Naive thymus-derived CD4-positive, alpha-beta T cell (primary cell): ENCODE measurements at regions of chr10 and their contacts with region 1.

Region 1: GRCh38 chr10:98134431-98135221 is at the start of gene R3HCC1L:
- DNase-seq: peak; percentile 87 to 95 (median 93)
- ATAC-seq: peak; percentile 98
- H3K4me3 ChIP-seq: peak within 1 kb of the TSS; percentile 91
- H3K4me3 Mint-ChIP-seq: peak within 1 kb of the TSS; percentile 78 to 95 (median 86)
- H3K27ac ChIP-seq: peak within 1 kb of the TSS; percentile 96
- H3K27ac Mint-ChIP-seq: peak within 1 kb of the TSS; percentile 71 to 98 (median 96)
- H3K4me1 ChIP-seq: peaks cover 23 to 27% of the 10 kb centered on the region in 2 donors
- H3K4me1 Mint-ChIP-seq: peaks cover 0 to 53% (median 44%) of the 10 kb centered on the region in 7 donors
- H3K27me3 ChIP-seq: no peaks in the 10 kb centered on the region
- H3K27me3 Mint-ChIP-seq: peaks cover 0 to 2% (median 0%) of the 10 kb centered on the region in 5 donors
- total RNA-seq, gene R3HCC1L: 17.6 to 25.3 (median 20.4) TPM

Region 2: GRCh38 chr10:97632949-97633884 is 501.4 kb before region 1 on chr10 and contains the start of gene MORN4:
- CTCF ChIA-PET with region 1: no interaction called
- POLR2A ChIA-PET with region 1: no interaction called
- intact Hi-C with region 1: loop called in 1 of 2 experiments (anchors 1 kb)
- DNase-seq: peak; percentile 82 to 94 (median 92)
- ATAC-seq: peak; percentile 100
- H3K4me3 ChIP-seq: peak within 1 kb of the TSS; percentile 91
- H3K4me3 Mint-ChIP-seq: peak within 1 kb of the TSS; percentile 92 to 100 (median 98)
- H3K27ac ChIP-seq: peak within 1 kb of the TSS; percentile 50
- H3K27ac Mint-ChIP-seq: peak within 1 kb of the TSS; percentile 82 to 96 (median 92)
- H3K4me1 ChIP-seq: peaks cover 0 to 10% of the 10 kb centered on the region in 2 donors
- H3K4me1 Mint-ChIP-seq: peaks cover 10 to 18% (median 16%) of the 10 kb centered on the region in 7 donors
- H3K27me3 ChIP-seq: no peaks in the 10 kb centered on the region
- H3K27me3 Mint-ChIP-seq: no peaks in the 10 kb centered on the region
- total RNA-seq, gene MORN4: 0.78 to 4.1 (median 1.5) TPM

Region 3: DNA sequence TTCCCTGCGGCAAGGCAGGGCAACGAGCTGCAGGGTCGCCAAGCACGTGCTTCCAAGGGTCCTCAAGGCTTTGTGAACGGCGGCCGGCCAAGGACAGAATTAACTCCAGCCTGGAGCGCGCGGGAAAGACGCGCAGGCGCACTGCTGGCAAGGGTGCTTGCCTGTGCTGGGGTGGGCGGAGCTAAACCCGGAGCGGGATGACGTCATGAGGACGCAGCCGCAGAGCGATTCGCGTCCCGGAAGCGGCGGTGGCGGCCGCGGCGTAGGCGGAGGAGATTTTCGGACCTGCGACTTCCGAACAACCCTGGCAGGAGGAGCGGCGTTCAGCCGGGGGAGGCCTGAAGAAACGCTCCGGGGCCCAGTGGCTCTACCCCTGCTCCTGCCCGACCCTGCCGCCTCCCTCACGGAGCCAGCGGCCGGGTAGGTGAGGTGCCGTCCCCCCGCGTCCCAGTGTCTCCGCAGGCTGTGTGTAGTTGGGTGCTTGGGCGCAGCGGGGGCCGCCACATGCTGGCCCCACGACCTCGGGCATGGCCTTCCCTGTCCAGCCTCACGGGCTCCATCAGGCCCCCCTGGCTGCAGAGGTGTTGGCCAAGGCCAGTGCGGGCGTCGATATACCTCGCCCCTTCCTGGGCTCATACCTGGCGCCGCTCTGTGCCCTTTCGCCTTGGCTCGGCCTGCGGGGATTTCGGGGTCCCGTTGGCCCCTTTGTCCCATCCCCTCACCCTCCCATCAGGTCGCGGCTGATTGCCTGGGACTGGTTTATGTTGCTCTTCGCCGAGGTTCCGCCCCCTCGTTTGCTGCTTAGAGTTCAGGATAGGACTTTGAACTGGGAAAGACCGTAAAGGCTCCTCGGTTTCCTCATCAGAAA is 397.5 kb before region 1 on chr10 and contains the start of gene ZFYVE27:
- CTCF ChIA-PET with region 1: interaction called, 3 read pairs
- POLR2A ChIA-PET with region 1: interaction called, 7 read pairs
- intact Hi-C with region 1: loop called in 1 of 2 experiments (anchors 10 kb)
- DNase-seq: peak; percentile 88 to 99 (median 94)
- ATAC-seq: peak; percentile 96
- H3K4me3 ChIP-seq: peak within 1 kb of the TSS; percentile 86
- H3K4me3 Mint-ChIP-seq: peak within 1 kb of the TSS; percentile 88 to 98 (median 94)
- H3K27ac ChIP-seq: peak within 1 kb of the TSS; percentile 99
- H3K27ac Mint-ChIP-seq: peak within 1 kb of the TSS; percentile 95 to 99 (median 97)
- H3K4me1 ChIP-seq: peaks cover 18% of the 10 kb centered on the region in 2 donors
- H3K4me1 Mint-ChIP-seq: peaks cover 20 to 62% (median 58%) of the 10 kb centered on the region in 7 donors
- H3K27me3 ChIP-seq: no peaks in the 10 kb centered on the region
- H3K27me3 Mint-ChIP-seq: peaks cover 0 to 3% (median 0%) of the 10 kb centered on the region in 5 donors
- total RNA-seq, gene ZFYVE27: 31.0 to 68.8 (median 61.8) TPM

Region 4: GRCh38 chr10:98414932-98415730 is 280.5 kb after region 1 on chr10 and contains the start of gene PYROXD2:
- CTCF ChIA-PET with region 1: no interaction called
- POLR2A ChIA-PET with region 1: no interaction called
- intact Hi-C with region 1: loop called in 1 of 2 experiments (anchors 1 kb)
- DNase-seq: peak in 8 of 9 donors; percentile 28 to 74 (median 56)
- ATAC-seq: peak; percentile 86
- H3K4me3 ChIP-seq: peak within 1 kb of the TSS; percentile 58
- H3K4me3 Mint-ChIP-seq: peak within 1 kb of the TSS; percentile 90 to 99 (median 96)
- H3K27ac ChIP-seq: peak within 1 kb of the TSS; percentile 69
- H3K27ac Mint-ChIP-seq: peak within 1 kb of the TSS; percentile 85 to 98 (median 94)
- H3K4me1 ChIP-seq: peaks cover 0 to 13% of the 10 kb centered on the region in 2 donors
- H3K4me1 Mint-ChIP-seq: peaks cover 12 to 42% (median 25%) of the 10 kb centered on the region in 7 donors
- H3K27me3 ChIP-seq: no peaks in the 10 kb centered on the region
- H3K27me3 Mint-ChIP-seq: no peaks in the 10 kb centered on the region
- total RNA-seq, gene PYROXD2: 11.9 to 37.1 (median 26.9) TPM

Region 5: GRCh38 chr10:98758463-98758862 is 623.8 kb after region 1 on chr10:
- CTCF ChIA-PET with region 1: no interaction called
- POLR2A ChIA-PET with region 1: no interaction called
- intact Hi-C with region 1: no loop called
- DNase-seq: no peak
- ATAC-seq: no peak
- H3K4me3 ChIP-seq: no peak overlapping the region
- H3K4me3 Mint-ChIP-seq: no peak overlapping the region
- H3K27ac ChIP-seq: no peak overlapping the region
- H3K27ac Mint-ChIP-seq: no peak overlapping the region
- H3K4me1 ChIP-seq: no peaks in the 10 kb centered on the region
- H3K4me1 Mint-ChIP-seq: no peaks in the 10 kb centered on the region
- H3K27me3 ChIP-seq: no peaks in the 10 kb centered on the region
- H3K27me3 Mint-ChIP-seq: peaks cover 0 to 4% (median 0%) of the 10 kb centered on the region in 5 donors

Region 6: DNA sequence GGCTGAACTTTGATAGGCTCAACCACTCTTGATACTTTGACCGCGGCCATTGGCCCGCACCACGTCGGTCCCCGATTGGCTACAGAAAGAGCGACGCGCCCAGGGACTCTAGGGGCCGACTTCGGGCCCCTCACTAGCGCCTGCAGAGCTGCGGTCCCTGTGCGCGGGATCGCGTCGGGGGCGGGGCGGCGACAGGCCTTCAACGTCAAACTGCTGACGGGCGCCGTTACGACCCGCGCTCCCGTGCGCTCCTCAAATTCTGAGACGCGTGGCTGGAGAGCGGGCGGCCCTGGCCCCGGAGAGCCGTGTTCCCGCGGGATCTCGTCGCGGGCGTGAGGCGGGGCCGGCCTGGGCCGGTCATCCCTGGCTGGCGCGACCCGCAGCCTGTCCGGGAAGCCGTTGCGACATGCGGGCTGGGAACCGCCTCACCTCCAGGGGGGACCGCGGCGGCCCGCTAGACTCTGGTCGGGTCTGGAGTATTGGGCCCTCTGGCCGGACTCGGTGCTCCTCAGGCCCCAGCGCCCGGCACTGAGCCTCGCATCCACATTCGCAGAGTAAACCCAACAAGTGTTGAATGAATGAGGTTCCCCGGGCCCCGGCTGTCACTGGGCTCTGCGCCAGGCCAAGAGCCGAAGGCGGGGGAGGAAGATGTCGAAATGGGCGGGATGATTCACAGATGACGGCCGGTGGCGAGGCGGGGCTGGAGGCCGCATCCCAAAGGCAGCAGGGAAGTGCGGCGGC is 1486.3 kb after region 1 on chr10:
- CTCF ChIA-PET with region 1: no interaction called
- POLR2A ChIA-PET with region 1: no interaction called
- intact Hi-C with region 1: loop called in 1 of 2 experiments (anchors 2 kb)
- DNase-seq: peak in 7 of 9 donors; percentile 66 to 86 (median 73)
- ATAC-seq: peak; percentile 89
- H3K4me3 ChIP-seq: peak overlapping the region; percentile 85
- H3K4me3 Mint-ChIP-seq: peak overlapping the region; percentile 83 to 93 (median 88)
- H3K27ac ChIP-seq: peak overlapping the region; percentile 99
- H3K27ac Mint-ChIP-seq: peak overlapping the region; percentile 75 to 98 (median 94)
- H3K4me1 ChIP-seq: peaks cover 20 to 29% of the 10 kb centered on the region in 2 donors
- H3K4me1 Mint-ChIP-seq: peaks cover 27 to 53% (median 45%) of the 10 kb centered on the region in 7 donors
- H3K27me3 ChIP-seq: no peaks in the 10 kb centered on the region
- H3K27me3 Mint-ChIP-seq: no peaks in the 10 kb centered on the region

Region 7: DNA sequence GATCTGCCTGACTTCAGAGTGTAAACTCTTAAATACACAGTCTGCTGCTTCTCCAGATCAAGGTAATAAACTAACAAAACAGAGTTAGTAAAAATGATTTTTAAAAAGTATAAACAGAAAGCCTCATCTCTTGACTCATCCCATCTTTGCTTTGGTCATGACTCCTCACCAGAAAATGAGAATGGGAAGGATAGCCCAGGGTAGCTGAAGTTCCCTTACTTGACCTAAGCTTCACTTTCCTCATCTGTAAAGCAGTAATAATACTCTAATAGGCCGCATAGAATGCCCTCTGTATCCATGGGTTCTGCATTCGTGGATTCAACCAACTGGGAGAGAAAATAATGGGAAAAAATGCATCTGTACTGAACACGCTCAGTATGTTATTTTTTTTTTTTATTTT is 1496.9 kb after region 1 on chr10:
- CTCF ChIA-PET with region 1: no interaction called
- POLR2A ChIA-PET with region 1: no interaction called
- intact Hi-C with region 1: no loop called
- DNase-seq: no peak
- ATAC-seq: no peak
- H3K4me3 ChIP-seq: no peak overlapping the region
- H3K4me3 Mint-ChIP-seq: no peak overlapping the region
- H3K27ac ChIP-seq: no peak overlapping the region
- H3K27ac Mint-ChIP-seq: no peak overlapping the region
- H3K4me1 ChIP-seq: no peaks in the 10 kb centered on the region
- H3K4me1 Mint-ChIP-seq: no peaks in the 10 kb centered on the region
- H3K27me3 ChIP-seq: no peaks in the 10 kb centered on the region
- H3K27me3 Mint-ChIP-seq: peaks cover 26 to 38% (median 33%) of the 10 kb centered on the region in 5 donors